ENCODE measurements at regions of chr5 and their contacts with region 1.

Region 1: DNA sequence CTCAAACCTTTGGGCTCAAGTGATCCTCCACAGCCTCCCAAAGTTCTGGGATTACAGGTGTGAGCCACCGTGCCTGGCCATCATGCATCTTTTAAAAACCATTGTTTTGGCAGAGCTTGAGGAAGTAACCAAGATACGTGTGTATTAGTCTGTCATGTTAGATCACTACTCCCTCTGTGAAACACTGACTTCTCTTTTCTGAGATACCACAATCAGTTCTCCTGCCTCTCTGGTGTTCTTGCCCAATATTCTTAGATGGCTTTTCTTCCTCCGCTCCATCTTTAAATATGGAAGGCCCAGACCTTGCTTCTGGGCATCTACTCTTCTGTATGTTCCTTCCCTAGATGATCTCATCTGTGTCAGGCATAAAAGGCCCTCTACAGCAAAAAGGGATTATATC is 14.2 kb upstream of the CCNB1 start:
- DNase-seq: no peak
- ATAC-seq: no peak
- H3K4me3 ChIP-seq: no peak overlapping the region
- H3K27ac ChIP-seq: no peak overlapping the region
- H3K4me1 ChIP-seq: peaks cover 10% of the 10 kb centered on the region; the same call in 1 of the 2 replicates
- H3K27me3 ChIP-seq: no peaks in the 10 kb centered on the region
- CTCF ChIP-seq: no peak
- EP300 ChIP-seq: no peak
- POLR2A ChIP-seq: no peak
- RAD21 ChIP-seq: no peak

Region 2: DNA sequence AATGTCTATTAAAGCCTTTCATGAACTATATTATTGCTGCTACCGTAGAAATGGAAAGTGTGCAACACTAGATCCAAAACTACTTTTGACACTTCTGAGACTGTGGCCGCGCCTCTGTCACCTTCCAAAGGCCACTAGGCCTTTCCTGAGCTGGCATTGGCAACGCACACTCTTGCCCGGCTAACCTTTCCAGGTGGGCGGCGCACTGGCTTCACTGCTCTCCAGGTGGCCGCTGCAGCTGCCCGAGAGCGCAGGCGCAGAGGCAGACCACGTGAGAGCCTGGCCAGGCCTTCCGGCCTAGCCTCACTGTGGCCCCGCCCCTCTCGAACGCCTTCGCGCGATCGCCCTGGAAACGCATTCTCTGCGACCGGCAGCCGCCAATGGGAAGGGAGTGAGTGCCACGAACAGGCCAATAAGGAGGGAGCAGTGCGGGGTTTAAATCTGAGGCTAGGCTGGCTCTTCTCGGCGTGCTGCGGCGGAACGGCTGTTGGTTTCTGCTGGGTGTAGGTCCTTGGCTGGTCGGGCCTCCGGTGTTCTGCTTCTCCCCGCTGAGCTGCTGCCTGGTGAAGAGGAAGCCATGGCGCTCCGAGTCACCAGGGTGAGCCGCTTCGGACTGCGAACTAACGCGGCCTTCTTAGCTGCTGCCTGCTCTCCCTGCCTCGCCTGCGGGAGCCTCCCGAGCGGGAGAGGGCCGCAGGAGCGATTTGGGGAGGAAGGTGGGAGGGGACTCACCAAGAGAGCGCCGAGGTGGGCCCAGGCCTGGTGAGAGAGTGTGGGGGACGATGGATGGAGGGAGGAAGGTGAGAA is 14.2 kb after region 1 on chr5 and contains the start of gene CCNB1:
- CTCF ChIA-PET with region 1: no interaction called
- POLR2A ChIA-PET with region 1: no interaction called
- in situ Hi-C with region 1: no loop called
- intact Hi-C with region 1: loop called (anchors 1 kb)
- DNase-seq: peak; percentile 97
- ATAC-seq: peak; percentile 99
- H3K4me3 ChIP-seq: peak within 1 kb of the TSS; percentile 94 to 95 (median 95)
- H3K27ac ChIP-seq: peak within 1 kb of the TSS; percentile 89
- H3K4me1 ChIP-seq: peaks cover 50% of the 10 kb centered on the region
- H3K27me3 ChIP-seq: no peaks in the 10 kb centered on the region
- CTCF ChIP-seq: peak; percentile 68
- EP300 ChIP-seq: no peak
- POLR2A ChIP-seq: peak; percentile 89
- RAD21 ChIP-seq: peak; percentile 34; the same call in 1 of the 2 replicates
- total RNA-seq, gene CCNB1: 316 and 431 TPM in 2 replicates

Region 3: GRCh38 chr5:69250598-69250997 is 97.9 kb after region 1 on chr5:
- CTCF ChIA-PET with region 1: no interaction called
- POLR2A ChIA-PET with region 1: no interaction called
- in situ Hi-C with region 1: no loop called
- intact Hi-C with region 1: no loop called
- DNase-seq: no peak
- ATAC-seq: no peak
- H3K4me3 ChIP-seq: no peak overlapping the region
- H3K27ac ChIP-seq: peak overlapping the region; percentile 39
- H3K4me1 ChIP-seq: peaks cover 8% of the 10 kb centered on the region; the same call in 1 of the 2 replicates
- H3K27me3 ChIP-seq: no peaks in the 10 kb centered on the region
- CTCF ChIP-seq: no peak
- EP300 ChIP-seq: no peak
- POLR2A ChIP-seq: no peak
- RAD21 ChIP-seq: no peak

Measured in HepG2 (cell line).